Dorsolateral prefrontal cortex (tissue), 120 donors: ENCODE measurements at regions of chr10 and their contacts with region 1.

Region 1: DNA sequence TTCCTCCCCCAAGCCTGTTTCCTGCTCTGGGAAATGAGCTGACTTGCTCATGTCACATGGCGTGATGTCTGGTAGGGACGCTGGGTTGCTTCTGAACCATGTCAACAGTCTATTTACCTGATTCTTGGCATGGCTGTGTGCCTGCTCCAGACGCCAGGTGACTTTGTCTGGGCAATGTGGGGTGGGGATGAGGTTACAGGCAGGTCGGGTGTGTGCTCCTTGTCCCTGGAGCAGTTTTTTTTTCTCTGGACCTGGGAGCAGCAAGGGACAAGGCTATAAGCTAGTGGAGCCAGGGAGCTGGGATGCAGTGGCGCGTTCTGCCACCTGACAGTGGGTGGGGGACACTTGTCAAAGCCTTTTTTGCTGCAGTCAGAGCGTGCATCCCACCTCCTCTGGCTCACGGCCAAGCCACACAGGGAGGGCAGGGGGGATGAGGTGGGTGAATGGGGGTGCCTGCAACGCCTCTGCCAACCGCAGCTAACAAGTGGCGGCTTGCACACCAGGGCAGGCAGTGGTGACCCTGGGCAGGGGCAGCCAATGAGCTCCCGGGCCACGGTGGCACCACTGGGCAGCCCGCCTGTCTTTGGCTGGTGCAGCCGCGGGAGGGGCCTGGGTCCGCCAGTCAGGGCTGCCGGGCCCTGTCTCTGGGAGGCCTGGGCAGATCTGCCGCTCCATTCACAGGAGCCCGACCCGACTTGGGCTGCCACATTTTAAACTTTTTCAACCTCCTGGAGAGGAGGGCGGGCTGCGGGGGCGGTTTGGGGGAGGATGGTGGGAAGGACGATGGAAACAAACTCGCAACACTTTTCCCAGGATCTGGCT is 22.9 kb downstream of the DNAJB12 start:
- DNase-seq: peak; percentile 74 to 95 (median 92)
- H3K4me3 ChIP-seq: peak overlapping the region in 25 of 59 donors; percentile 0 to 39 (median 18)
- H3K27ac ChIP-seq: peak overlapping the region; percentile 76 to 99 (median 95)
- H3K27me3 ChIP-seq: no peaks in the 10 kb centered on the region
- CTCF ChIP-seq: peak in 45 of 56 donors; percentile 15 to 67 (median 42)

Region 2: GRCh38 chr10:71957546-71958275 is 374.1 kb before region 1 on chr10:
- intact Hi-C with region 1: loop called (anchors 5 to 10 kb)
- DNase-seq: no peak
- H3K4me3 ChIP-seq: no peak overlapping the region
- H3K27ac ChIP-seq: peak overlapping the region in 55 of 59 donors; percentile 1 to 86 (median 64)
- H3K27me3 ChIP-seq: no peaks in the 10 kb centered on the region
- CTCF ChIP-seq: peak in 6 of 56 donors; percentile 6 to 22 (median 12)

Region 3: DNA sequence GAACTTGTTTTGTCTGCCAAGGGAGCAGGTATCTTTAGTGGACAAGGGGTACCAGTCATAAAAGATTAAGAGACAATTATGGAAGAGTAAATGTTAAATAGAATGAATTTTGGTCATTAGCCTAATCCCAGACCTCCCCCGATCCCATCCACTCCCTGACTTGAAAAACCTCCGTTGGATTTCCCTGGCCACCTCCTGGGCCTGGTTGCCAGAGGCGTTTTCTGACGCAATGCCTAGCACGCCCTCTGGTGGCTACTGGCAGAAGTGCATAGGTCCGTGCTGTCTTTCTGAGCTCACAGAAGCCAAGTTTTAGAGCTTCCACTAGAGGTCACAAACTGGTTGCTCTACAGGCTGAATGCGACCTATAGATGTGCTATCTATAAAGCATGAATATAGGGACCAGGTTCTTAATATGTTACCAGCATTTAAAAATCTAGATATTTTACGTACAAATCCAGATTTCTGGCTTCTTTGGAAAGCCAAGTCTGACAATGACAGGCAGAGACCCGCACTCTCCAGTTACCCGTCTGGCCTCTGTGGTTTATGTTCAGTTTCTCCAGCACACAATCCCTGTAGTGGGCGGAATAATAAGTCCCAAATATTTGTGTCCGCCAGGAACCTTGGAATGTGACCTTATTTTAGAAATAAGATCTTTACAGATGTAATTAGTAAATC is 283.2 kb before region 1 on chr10:
- intact Hi-C with region 1: loop called (anchors 5 kb)
- DNase-seq: peak; percentile 91 to 97 (median 94)
- H3K4me3 ChIP-seq: no peak overlapping the region
- H3K27ac ChIP-seq: peak overlapping the region in 44 of 59 donors; percentile 1 to 98 (median 45)
- H3K27me3 ChIP-seq: no peaks in the 10 kb centered on the region
- CTCF ChIP-seq: peak; percentile 98 to 100 (median 100)

Region 4: GRCh38 chr10:72133517-72133916 is 198.3 kb before region 1 on chr10:
- intact Hi-C with region 1: loop called (anchors 2 to 5 kb)
- DNase-seq: no peak
- H3K4me3 ChIP-seq: no peak overlapping the region
- H3K27ac ChIP-seq: peak overlapping the region in 35 of 59 donors; percentile 2 to 79 (median 48)
- H3K27me3 ChIP-seq: no peaks in the 10 kb centered on the region
- CTCF ChIP-seq: no peak

Region 5: DNA sequence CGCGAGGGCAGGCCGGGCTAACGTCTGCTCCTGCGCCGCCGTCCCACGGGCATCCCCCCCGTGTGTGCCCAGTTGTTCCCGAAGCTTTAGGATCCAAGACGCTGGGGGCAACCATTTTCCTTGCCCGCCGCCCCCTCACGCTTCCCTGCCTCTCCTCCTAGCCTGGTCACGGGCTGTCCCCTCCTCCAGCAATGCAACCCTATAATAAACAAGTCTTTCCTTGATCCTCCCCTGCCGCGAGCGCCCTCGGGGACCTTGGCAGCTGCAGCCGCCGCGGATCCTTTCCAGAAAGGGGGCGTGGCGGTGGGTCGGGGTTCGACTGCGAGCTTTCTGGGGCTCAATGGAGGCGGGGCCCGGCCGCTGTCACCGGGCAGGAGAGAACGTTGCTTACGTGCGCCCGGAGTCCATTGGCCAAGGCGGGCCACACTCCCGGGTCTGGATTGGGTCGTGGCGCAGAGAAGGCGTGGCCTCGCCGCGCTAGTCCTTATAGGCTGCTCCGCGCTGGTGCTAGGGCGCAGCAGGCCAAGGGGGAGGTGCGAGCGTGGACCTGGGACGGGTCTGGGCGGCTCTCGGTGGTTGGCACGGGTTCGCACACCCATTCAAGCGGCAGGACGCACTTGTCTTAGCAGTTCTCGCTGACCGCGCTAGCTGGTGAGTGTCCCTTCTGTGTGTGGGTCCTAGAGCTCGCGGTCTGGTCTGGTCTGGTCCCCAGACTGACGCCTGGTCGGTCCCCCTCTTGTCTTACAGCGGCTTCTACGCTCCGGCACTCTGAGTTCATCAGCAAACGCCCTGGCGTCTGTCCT is 58.2 kb before region 1 on chr10 and contains the start of gene DDIT4:
- intact Hi-C with region 1: loop called in 1 of 2 experiments (anchors 2 kb)
- DNase-seq: peak; percentile 100
- H3K4me3 ChIP-seq: peak within 1 kb of the TSS; percentile 69 to 100 (median 93)
- H3K27ac ChIP-seq: peak within 1 kb of the TSS; percentile 95 to 100 (median 100)
- H3K27me3 ChIP-seq: no peaks in the 10 kb centered on the region
- CTCF ChIP-seq: peak in 20 of 56 donors; percentile 5 to 48 (median 26)
- total RNA-seq, gene DDIT4: 33.5 to 407 (median 111) TPM